GM12878 (cell line): ENCODE measurements at regions of chr6 and their contacts with region 1.

Region 1: DNA sequence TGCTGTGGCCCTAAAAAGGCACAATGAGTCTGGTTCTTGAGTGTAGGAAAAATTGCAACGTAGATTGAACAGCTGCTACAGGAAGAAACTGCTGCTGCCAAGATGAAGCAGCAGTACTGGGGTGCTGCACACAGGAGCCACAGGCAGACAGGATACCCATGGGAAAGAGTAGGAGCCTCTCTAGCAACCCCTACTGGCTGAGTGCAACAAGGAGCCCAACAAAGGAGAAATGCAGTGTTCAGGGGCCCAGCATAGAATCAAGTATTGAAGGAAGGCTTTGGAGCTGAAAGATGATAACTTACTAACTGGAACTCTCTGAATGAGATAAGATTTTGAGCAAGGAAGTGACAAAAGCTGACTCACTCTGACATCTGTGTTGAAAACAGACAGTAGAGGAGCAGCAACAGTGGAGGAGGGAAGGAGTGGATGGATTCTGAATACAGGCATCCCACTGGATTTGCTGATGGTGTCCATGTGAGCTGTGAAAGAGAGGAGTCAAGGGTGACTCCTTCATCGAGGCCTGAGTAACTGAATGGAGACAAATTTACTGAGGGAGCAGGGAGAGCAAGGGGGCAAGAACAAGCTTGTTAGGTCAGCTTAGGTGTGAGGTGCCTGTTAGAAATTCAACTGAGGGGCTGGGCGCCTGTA is 534.7 kb upstream of the JARID2 start:
- DNase-seq: no peak
- ATAC-seq: peak; percentile 95
- H3K4me3 ChIP-seq: no peak overlapping the region
- H3K27ac ChIP-seq: no peak overlapping the region
- H3K4me1 ChIP-seq: no peaks in the 10 kb centered on the region
- H3K27me3 ChIP-seq: no peaks in the 10 kb centered on the region
- CTCF ChIP-seq: peak; percentile 63 to 77 (median 71)
- EP300 ChIP-seq: no peak
- POLR2A ChIP-seq: no peak
- RAD21 ChIP-seq: peak; percentile 63

Region 2: DNA sequence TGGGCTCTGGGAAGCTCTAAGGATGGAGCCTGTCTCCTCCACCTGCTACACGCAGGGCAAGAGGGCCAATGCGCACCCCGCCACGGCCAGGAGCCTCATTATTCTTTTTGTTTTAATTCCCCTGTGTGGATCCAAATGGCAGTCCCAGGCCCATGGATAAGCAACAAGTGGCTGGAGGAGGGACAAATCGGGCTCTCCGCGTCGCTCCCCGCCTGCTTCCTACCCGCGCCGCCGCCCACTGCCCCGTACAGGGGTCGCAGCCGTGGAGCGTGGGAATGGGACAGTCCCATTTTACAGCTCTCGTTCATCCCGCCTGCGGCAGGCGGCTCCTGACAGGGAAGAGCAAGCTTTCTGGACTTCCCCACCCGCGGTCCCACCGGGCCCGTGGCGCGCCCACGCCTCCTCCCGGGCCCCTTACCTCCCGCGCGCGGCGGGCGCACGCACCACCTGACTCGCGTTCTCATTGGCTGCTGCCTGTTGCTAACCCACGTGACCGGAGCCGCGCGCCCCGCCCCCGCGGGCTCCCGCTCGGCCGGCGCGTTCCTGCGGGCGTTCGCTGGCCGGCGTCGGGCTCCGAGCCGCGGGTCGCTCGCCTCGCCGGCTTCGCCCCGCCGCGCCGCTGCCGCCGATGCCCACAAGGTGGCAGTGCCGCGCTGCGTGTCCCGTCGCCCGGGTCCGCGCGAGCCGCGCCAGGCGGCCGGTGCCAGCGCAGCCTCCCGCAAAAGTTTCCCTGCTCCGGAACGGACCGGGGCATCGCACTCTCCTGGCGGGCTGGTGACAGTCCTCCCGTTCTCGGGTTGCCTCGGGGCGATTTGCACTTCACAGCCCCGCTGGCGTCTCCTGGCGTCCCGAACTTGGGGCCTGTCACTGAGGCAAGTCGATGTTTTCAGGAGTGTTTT is 500.3 kb before region 1 on chr6:
- CTCF ChIA-PET with region 1: interaction called, 4 read pairs
- POLR2A ChIA-PET with region 1: no interaction called
- RAD21 ChIA-PET with region 1: no interaction called
- SMC1A ChIA-PET with region 1: interaction called, 6 read pairs
- in situ Hi-C with region 1: no loop called
- intact Hi-C with region 1: loop called (anchors 2 kb)
- DNase-seq: peak; percentile 48
- ATAC-seq: peak; percentile 98
- H3K4me3 ChIP-seq: peak overlapping the region; percentile 91
- H3K27ac ChIP-seq: peak overlapping the region; percentile 81
- H3K4me1 ChIP-seq: peaks cover 16% of the 10 kb centered on the region
- H3K27me3 ChIP-seq: no peaks in the 10 kb centered on the region
- CTCF ChIP-seq: peak; percentile 49 to 80 (median 60); a peak in 5 of 6 replicates
- EP300 ChIP-seq: no peak
- POLR2A ChIP-seq: peak; percentile 78
- RAD21 ChIP-seq: peak; percentile 91

Region 3: GRCh38 chr6:14216946-14217684 is 494.1 kb before region 1 on chr6:
- CTCF ChIA-PET with region 1: interaction called, 10 read pairs
- POLR2A ChIA-PET with region 1: no interaction called
- RAD21 ChIA-PET with region 1: no interaction called
- SMC1A ChIA-PET with region 1: interaction called, 6 read pairs
- in situ Hi-C with region 1: no loop called
- intact Hi-C with region 1: no loop called
- DNase-seq: no peak
- ATAC-seq: no peak
- H3K4me3 ChIP-seq: no peak overlapping the region
- H3K27ac ChIP-seq: no peak overlapping the region
- H3K4me1 ChIP-seq: no peaks in the 10 kb centered on the region
- H3K27me3 ChIP-seq: no peaks in the 10 kb centered on the region
- CTCF ChIP-seq: no peak
- EP300 ChIP-seq: no peak
- POLR2A ChIP-seq: no peak
- RAD21 ChIP-seq: no peak

Region 4: GRCh38 chr6:14660806-14661579 is 50.2 kb before region 1 on chr6:
- CTCF ChIA-PET with region 1: interaction called, 13 read pairs
- POLR2A ChIA-PET with region 1: no interaction called
- RAD21 ChIA-PET with region 1: interaction called, 3 read pairs
- SMC1A ChIA-PET with region 1: interaction called, 3 read pairs
- in situ Hi-C with region 1: no loop called
- intact Hi-C with region 1: no loop called
- DNase-seq: peak; percentile 47
- ATAC-seq: peak; percentile 79
- H3K4me3 ChIP-seq: no peak overlapping the region; the same call in 1 of the 2 replicates
- H3K27ac ChIP-seq: no peak overlapping the region
- H3K4me1 ChIP-seq: peaks cover 33% of the 10 kb centered on the region
- H3K27me3 ChIP-seq: peaks cover 0 to 3% of the 10 kb centered on the region in 2 experiments; a peak in 2 of 4 replicates
- CTCF ChIP-seq: no peak
- EP300 ChIP-seq: 0 out of 4 replicates have a peak, but pooled peaks of 1 of the 2 experiments have one; percentile 11
- POLR2A ChIP-seq: no peak
- RAD21 ChIP-seq: no peak

Region 5: GRCh38 chr6:14728396-14729024 is 17.3 kb after region 1 on chr6:
- CTCF ChIA-PET with region 1: interaction called, 5 read pairs
- POLR2A ChIA-PET with region 1: no interaction called
- RAD21 ChIA-PET with region 1: interaction called, 21 read pairs
- SMC1A ChIA-PET with region 1: interaction called, 39 read pairs
- in situ Hi-C with region 1: no loop called
- intact Hi-C with region 1: no loop called
- DNase-seq: no peak
- ATAC-seq: no peak
- H3K4me3 ChIP-seq: no peak overlapping the region
- H3K27ac ChIP-seq: peak overlapping the region; percentile 67
- H3K4me1 ChIP-seq: peaks cover 24% of the 10 kb centered on the region
- H3K27me3 ChIP-seq: no peaks in the 10 kb centered on the region
- CTCF ChIP-seq: no peak
- EP300 ChIP-seq: no peak
- POLR2A ChIP-seq: no peak
- RAD21 ChIP-seq: no peak